ENCODE measurements at regions of chr9 and their contacts with region 1.

Region 1: GRCh38 chr9:35756275-35757225 is 2.5 kb upstream of the MSMP start:
- DNase-seq: peak; percentile 49 to 87 (median 80)
- ATAC-seq: peak; percentile 97
- H3K4me3 ChIP-seq: peak overlapping the region; percentile 75 to 98
- H3K4me3 Mint-ChIP-seq: peak overlapping the region; percentile 91
- H3K27ac ChIP-seq: peak overlapping the region; percentile 72 to 83
- H3K27ac Mint-ChIP-seq: peak overlapping the region; percentile 91
- H3K4me1 ChIP-seq: peaks cover 18% of the 10 kb centered on the region
- H3K4me1 Mint-ChIP-seq: peaks cover 52% of the 10 kb centered on the region
- H3K27me3 ChIP-seq: no peaks in the 10 kb centered on the region
- H3K27me3 Mint-ChIP-seq: no peaks in the 10 kb centered on the region
- CTCF ChIP-seq: peak; percentile 67

Region 2: DNA sequence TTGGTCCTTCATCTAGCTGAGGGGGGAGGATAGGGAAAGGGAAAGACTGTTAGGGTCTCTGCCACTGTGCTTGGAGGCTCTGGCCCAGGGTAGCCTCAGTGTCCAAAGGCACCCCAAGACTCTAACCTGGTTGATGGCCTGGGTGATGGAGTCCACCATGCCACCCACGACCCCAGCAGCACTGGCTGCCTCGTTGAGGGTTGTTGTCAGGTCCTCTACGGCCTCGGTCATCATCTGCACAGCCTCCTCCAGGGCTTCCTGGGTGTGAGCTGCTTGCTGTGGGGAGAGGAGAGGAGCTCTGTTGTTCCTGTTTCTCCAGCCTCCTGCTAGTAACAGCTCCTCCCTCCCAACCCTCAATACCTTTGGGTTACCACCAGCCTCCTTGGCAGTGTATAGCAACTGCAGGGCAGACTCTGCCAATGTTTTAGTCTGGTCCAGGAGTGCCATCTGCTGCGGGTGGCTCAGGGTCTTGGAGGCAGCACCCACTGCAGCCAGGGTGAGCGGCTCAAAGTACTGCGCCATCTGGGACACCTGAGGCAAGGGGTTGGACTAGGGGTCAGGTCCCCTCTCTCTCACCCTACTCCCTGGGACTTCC is 50.6 kb before region 1 on chr9:
- CTCF ChIA-PET with region 1: no interaction called
- POLR2A ChIA-PET with region 1: no interaction called
- intact Hi-C with region 1: no loop called
- DNase-seq: no peak
- ATAC-seq: no peak
- H3K4me3 ChIP-seq: no peak overlapping the region
- H3K4me3 Mint-ChIP-seq: no peak overlapping the region
- H3K27ac ChIP-seq: no peak overlapping the region
- H3K27ac Mint-ChIP-seq: no peak overlapping the region
- H3K4me1 ChIP-seq: no peaks in the 10 kb centered on the region
- H3K4me1 Mint-ChIP-seq: no peaks in the 10 kb centered on the region
- H3K27me3 ChIP-seq: no peaks in the 10 kb centered on the region
- H3K27me3 Mint-ChIP-seq: no peaks in the 10 kb centered on the region
- CTCF ChIP-seq: no peak

Region 3: GRCh38 chr9:35741740-35742139 is 14.8 kb before region 1 on chr9:
- CTCF ChIA-PET with region 1: interaction called, 14 read pairs
- POLR2A ChIA-PET with region 1: interaction called, 4 read pairs
- intact Hi-C with region 1: no loop called
- DNase-seq: peak in 2 of 9 experiments; percentile 37 to 50
- ATAC-seq: no peak
- H3K4me3 ChIP-seq: no peak overlapping the region
- H3K4me3 Mint-ChIP-seq: no peak overlapping the region
- H3K27ac ChIP-seq: no peak overlapping the region
- H3K27ac Mint-ChIP-seq: peak overlapping the region; percentile 60
- H3K4me1 ChIP-seq: peaks cover 20% of the 10 kb centered on the region
- H3K4me1 Mint-ChIP-seq: peaks cover 27% of the 10 kb centered on the region
- H3K27me3 ChIP-seq: no peaks in the 10 kb centered on the region
- H3K27me3 Mint-ChIP-seq: no peaks in the 10 kb centered on the region
- CTCF ChIP-seq: no peak

Region 4: DNA sequence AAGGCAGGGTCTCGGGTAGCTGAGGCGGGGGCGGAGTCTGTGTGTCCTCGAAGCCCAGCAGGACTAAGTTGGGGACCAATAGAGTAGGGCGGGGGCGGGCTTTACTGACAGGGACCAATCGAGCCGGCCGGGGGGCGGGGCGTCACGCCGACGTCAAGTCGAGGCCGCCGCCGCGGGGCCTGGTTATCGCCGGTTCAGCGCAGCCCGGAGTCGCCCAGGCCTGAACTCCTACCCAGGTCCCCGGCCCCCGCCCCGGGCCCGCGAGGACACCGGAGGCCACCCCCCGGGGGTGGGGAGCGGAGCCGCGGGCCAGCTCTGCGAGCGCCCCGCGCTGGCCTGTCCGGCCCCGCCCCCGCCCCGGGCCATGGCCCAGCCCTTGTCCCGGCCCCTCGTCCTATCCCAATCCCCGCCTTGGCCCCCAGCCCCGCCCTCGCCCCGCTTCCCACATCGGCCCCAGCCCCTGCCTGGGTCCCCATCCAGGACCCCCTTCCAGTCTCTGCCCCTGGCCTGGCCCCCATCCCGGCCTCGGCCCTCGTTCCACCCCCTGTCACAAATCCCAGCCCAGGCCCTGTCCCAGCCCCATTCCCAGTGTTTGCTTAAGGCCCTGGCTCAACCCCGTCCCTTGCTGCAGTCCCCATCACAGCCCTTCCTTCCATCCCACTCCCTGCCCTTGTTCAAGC is 72.7 kb after region 1 on chr9 and contains the start of gene TMEM8B:
- CTCF ChIA-PET with region 1: interaction called, 6 read pairs
- POLR2A ChIA-PET with region 1: no interaction called
- intact Hi-C with region 1: loop called in 1 of 2 experiments (anchors 1 kb)
- DNase-seq: peak; percentile 88 to 96 (median 94)
- ATAC-seq: peak; percentile 93
- H3K4me3 ChIP-seq: peak within 1 kb of the TSS; percentile 67 to 89
- H3K4me3 Mint-ChIP-seq: peak within 1 kb of the TSS; percentile 95
- H3K27ac ChIP-seq: peak within 1 kb of the TSS; percentile 64 to 71
- H3K27ac Mint-ChIP-seq: peak within 1 kb of the TSS; percentile 91
- H3K4me1 ChIP-seq: peaks cover 13% of the 10 kb centered on the region
- H3K4me1 Mint-ChIP-seq: peaks cover 41% of the 10 kb centered on the region
- H3K27me3 ChIP-seq: no peaks in the 10 kb centered on the region
- H3K27me3 Mint-ChIP-seq: no peaks in the 10 kb centered on the region
- CTCF ChIP-seq: no peak
- total RNA-seq, gene TMEM8B: 6.4 to 7.2 TPM

Region 5: GRCh38 chr9:35984021-35984420 is 227.5 kb after region 1 on chr9:
- CTCF ChIA-PET with region 1: no interaction called
- POLR2A ChIA-PET with region 1: no interaction called
- intact Hi-C with region 1: no loop called
- DNase-seq: no peak
- ATAC-seq: no peak
- H3K4me3 ChIP-seq: no peak overlapping the region
- H3K4me3 Mint-ChIP-seq: no peak overlapping the region
- H3K27ac ChIP-seq: no peak overlapping the region
- H3K27ac Mint-ChIP-seq: no peak overlapping the region
- H3K4me1 ChIP-seq: no peaks in the 10 kb centered on the region
- H3K4me1 Mint-ChIP-seq: peaks cover 3% of the 10 kb centered on the region
- H3K27me3 ChIP-seq: peaks cover 0 to 7% of the 10 kb centered on the region in 2 experiments
- H3K27me3 Mint-ChIP-seq: peaks cover 19% of the 10 kb centered on the region
- CTCF ChIP-seq: no peak

Region 6: DNA sequence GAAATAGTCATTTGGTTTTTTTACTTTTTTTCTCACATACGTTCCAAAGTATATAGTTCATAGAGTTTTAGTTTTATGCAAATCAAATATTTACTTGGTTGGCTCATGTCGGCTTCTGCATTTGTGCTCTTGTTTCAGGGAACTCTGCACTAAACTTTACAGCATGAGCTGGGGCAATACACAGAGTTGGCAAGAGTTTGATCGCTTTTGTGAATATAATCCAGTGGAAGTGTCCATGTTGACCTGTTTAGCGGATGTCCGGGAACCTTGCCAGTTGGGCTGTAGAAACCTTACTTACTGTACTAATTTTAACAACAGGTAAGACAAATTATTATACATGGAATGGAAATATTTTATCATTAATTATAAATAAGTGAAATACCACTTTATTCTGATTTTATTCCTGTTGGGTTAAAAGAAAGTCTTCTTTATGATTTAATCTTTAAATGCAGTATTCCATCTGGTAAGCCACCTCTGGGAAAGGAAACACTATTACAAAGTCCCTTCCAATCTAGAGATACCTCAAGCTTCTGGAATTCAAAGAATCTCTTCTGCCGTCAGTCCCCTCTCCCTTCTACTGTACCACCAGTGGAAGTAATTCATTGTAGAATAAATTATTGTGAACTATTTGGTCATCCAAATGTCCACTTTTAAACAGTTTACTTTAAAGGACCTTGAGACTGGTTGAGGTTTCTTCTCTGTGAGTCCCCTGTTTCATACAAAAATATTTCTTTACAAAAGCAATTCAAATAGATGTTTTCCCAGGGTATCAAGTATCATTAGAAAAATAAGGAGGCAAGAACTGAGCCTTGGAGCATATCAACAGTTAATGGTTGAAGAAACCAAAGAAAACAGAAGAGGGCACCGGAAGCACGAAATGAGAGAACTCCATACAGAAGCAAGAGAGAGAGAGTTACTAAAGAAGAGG is 334.7 kb after region 1 on chr9:
- CTCF ChIA-PET with region 1: no interaction called
- POLR2A ChIA-PET with region 1: no interaction called
- intact Hi-C with region 1: no loop called
- DNase-seq: no peak
- ATAC-seq: no peak
- H3K4me3 ChIP-seq: no peak overlapping the region
- H3K4me3 Mint-ChIP-seq: peak overlapping the region; percentile 26
- H3K27ac ChIP-seq: no peak overlapping the region
- H3K27ac Mint-ChIP-seq: no peak overlapping the region
- H3K4me1 ChIP-seq: peaks cover 5% of the 10 kb centered on the region
- H3K4me1 Mint-ChIP-seq: peaks cover 12% of the 10 kb centered on the region
- H3K27me3 ChIP-seq: no peaks in the 10 kb centered on the region
- H3K27me3 Mint-ChIP-seq: no peaks in the 10 kb centered on the region
- CTCF ChIP-seq: no peak

Region 7: DNA sequence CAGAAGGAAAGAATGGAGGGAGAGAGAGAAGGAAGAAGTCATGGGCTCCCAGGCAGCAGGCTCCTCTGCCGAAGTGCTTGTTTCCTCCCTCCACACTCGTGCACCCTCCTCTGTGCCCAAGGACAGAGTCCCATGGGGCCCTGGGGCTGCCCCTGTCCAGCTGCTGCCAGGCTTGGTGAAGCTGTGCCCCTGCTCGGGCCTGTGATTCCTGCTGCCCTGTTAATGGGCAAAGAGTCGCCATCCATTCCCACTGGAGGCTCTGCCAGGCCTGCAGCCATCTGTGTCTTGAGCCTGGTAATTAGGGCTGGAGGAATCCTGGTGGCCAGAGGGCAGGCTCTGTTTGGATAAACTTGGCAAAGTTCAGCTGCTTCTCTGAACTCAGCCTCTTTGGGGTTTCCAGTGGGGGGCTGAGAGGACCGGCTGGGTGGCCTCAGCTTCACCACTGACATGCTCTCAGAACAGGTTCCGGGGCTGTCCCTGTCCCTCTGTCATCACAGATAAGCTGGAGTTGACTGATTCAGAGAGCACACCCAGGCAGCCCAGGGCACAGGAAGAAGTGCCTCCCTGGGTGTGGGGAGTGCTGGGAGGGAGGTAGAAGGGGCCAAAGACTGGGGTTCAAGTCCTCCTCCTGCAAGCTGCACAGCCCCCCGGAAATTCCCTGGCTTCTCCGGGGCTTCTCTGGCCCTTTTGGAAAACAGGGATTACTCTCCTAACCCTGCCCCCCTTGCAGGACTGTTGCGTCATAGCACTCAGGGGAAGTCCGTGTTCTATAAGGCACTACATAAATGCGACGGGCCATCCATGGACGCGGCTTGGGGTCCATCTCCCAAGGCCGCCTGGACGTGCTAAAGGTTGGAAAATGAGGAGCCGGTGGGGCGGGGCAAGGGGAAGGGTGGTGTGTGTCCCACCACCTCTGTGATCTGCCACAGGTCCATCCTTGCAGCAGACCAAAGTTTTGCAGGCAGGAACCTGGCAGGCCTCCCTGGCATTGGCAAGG is 1122.7 kb after region 1 on chr9:
- CTCF ChIA-PET with region 1: no interaction called
- POLR2A ChIA-PET with region 1: no interaction called
- intact Hi-C with region 1: no loop called
- DNase-seq: no peak
- ATAC-seq: no peak
- H3K4me3 ChIP-seq: no peak overlapping the region
- H3K4me3 Mint-ChIP-seq: no peak overlapping the region
- H3K27ac ChIP-seq: no peak overlapping the region
- H3K27ac Mint-ChIP-seq: no peak overlapping the region
- H3K4me1 ChIP-seq: no peaks in the 10 kb centered on the region
- H3K4me1 Mint-ChIP-seq: no peaks in the 10 kb centered on the region
- H3K27me3 ChIP-seq: no peaks in the 10 kb centered on the region
- H3K27me3 Mint-ChIP-seq: peaks cover 15% of the 10 kb centered on the region
- CTCF ChIP-seq: no peak

Measured in CD8-positive, alpha-beta T cell (primary cell).